AG04449 (cell line): ENCODE measurements at regions of chr12 and their contacts with region 1.

Region 1: GRCh38 chr12:9750276-9751203 is 10.2 kb downstream of the CD69 start:
- DNase-seq: no peak
- H3K4me3 ChIP-seq: no peak overlapping the region
- CTCF ChIP-seq: peak; percentile 67

Region 2: DNA sequence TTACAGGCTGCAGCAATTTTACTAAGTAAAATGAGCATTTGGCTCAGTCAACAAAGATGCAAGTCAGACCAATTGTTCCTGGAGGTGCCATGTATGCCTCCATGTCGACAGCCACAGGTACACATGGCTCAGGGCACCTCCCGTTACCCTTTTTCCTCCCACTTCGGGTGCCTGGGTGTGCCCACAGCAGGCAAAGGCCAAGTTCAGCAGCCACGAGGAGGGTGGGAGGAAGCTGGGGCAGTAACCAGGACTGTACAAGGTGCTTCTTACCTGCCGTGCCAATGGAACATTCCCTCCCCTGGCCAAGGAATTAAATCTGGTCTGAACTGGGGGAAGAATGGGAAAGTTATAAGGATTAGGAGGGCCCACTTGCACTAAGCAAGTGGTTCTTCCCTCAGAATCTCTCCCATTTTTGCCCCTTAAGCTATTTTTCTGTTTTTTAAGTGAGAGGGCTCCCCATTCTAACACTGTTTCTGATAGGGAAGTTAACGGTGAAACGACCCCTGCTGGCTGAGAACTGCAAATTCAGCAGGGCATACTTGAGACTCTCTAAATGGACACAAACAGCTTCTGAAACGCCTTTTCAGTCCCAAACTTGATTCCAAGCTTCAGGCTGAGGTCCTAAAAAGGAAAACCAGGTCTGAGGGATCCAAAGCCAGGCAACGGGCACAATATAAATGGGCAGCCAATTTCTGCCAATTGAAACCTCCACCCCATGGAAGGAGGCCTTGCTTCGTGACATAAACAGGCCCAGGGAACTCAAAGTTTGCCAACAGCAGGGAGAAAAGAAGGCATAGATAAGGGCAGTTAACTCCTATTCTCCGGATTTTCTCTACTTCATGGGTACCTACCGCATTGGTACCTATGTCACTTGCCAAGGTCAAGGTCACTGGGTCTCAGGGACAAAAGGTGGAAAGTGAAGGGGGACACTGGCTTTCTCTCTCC is 42.4 kb before region 1 on chr12:
- CTCF ChIA-PET with region 1: interaction called, 10 read pairs
- POLR2A ChIA-PET with region 1: no interaction called
- DNase-seq: no peak
- H3K4me3 ChIP-seq: no peak overlapping the region
- CTCF ChIP-seq: peak; percentile 70

Region 3: DNA sequence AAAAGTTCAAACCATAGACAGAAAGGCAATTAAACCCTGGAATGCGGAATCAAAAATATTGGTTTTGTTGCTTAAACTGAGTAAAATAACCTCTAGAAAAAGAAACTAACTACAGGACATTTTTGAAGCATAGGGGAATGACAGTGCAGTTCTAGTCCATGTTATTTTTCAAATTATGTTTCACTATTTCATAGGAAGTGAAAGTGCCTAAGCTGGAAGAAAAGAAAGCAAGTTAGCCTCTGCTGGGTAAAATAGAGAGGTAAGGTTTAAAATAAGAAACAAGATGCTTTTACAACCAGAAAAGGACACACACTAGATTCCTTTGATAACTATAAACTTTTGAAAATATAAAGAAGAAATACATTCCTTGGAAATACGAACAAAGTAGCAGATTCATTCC is 18.7 kb before region 1 on chr12:
- CTCF ChIA-PET with region 1: interaction called, 25 read pairs
- POLR2A ChIA-PET with region 1: no interaction called
- DNase-seq: no peak
- H3K4me3 ChIP-seq: no peak overlapping the region
- CTCF ChIP-seq: no peak

Region 4: GRCh38 chr12:9773216-9773877 is 22.8 kb after region 1 on chr12:
- CTCF ChIA-PET with region 1: interaction called, 18 read pairs
- POLR2A ChIA-PET with region 1: no interaction called
- DNase-seq: no peak
- H3K4me3 ChIP-seq: no peak overlapping the region
- CTCF ChIP-seq: no peak

Region 5: GRCh38 chr12:9925708-9926393 is 175.3 kb after region 1 on chr12:
- CTCF ChIA-PET with region 1: interaction called, 67 read pairs
- POLR2A ChIA-PET with region 1: no interaction called
- DNase-seq: no peak
- H3K4me3 ChIP-seq: no peak overlapping the region
- CTCF ChIP-seq: peak; percentile 29

Region 6: GRCh38 chr12:10016881-10017280 is 266.3 kb after region 1 on chr12:
- CTCF ChIA-PET with region 1: interaction called, 13 read pairs
- POLR2A ChIA-PET with region 1: no interaction called
- DNase-seq: no peak
- H3K4me3 ChIP-seq: no peak overlapping the region
- CTCF ChIP-seq: no peak

Region 7: GRCh38 chr12:10153271-10154144 is 403.0 kb after region 1 on chr12:
- CTCF ChIA-PET with region 1: interaction called, 11 read pairs
- POLR2A ChIA-PET with region 1: no interaction called
- DNase-seq: no peak
- H3K4me3 ChIP-seq: peak overlapping the region; percentile 58
- CTCF ChIP-seq: peak; percentile 60